Heart left ventricle (tissue), 16 donors: ENCODE measurements at regions of chr4 and their contacts with region 1.

Region 1: GRCh38 chr4:119785963-119786362 is 157.4 kb upstream of the PDE5A start:
- DNase-seq: no peak
- ATAC-seq: no peak
- H3K4me3 ChIP-seq: no peak overlapping the region
- H3K27ac ChIP-seq: no peak overlapping the region
- H3K4me1 ChIP-seq: no peaks in the 10 kb centered on the region
- H3K27me3 ChIP-seq: no peaks in the 10 kb centered on the region
- CTCF ChIP-seq: peak in 10 of 12 donors; percentile 15 to 51 (median 33)
- POLR2A ChIP-seq: no peak

Region 2: DNA sequence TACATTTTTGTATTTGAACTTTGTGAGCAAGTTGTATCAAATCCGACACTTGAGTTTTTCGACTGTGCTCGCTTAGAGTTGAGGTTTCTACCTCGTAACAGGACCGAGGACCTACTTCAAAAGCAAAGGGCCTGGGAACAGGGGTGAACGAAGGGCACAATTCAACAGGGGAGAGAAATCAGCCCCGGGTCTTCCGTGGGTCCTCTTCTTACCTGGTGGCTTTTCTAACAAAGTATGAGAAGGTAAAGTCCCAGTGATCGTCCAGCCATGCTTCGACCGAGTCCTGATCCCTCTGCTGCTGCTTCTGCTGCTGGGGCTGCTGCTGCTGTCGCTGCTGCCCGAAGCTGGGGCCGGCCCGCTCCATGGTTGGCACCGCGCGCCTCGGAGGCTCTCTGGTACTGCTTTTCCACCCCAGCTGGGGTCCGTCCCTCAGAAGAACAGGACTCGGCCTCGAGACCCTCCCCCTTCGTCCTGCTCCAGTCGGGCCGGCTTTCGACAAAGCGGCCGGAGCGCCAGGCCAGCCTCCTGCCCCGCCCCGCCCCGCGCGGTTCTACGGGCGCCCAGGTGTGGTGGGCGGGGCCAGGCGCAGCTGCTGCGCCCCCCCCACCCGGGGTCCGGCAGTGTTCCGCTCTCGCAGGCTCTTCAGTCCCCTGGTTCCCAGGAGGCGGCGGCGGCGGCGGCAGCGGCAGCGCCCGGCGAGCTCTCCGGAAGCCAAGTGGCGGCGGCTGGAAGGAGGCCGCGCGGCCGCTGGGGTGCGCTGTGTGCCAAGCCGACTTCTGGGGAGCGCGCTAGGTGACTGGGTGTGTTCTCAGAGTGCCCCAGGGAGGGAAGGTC is 157.4 kb before region 1 on chr4 and contains the start of gene PDE5A:
- intact Hi-C with region 1: loop called in 5 of 10 experiments (anchors 2 to 10 kb)
- DNase-seq: peak; percentile 76 to 90 (median 81)
- ATAC-seq: peak; percentile 78 to 94 (median 87)
- H3K4me3 ChIP-seq: peak within 1 kb of the TSS; percentile 51 to 87 (median 80)
- H3K27ac ChIP-seq: peak within 1 kb of the TSS; percentile 76 to 95 (median 87)
- H3K4me1 ChIP-seq: peaks cover 0 to 19% (median 3%) of the 10 kb centered on the region in 12 donors
- H3K27me3 ChIP-seq: peaks cover 0 to 35% (median 0%) of the 10 kb centered on the region in 9 donors
- CTCF ChIP-seq: peak; percentile 53 to 88 (median 78)
- POLR2A ChIP-seq: no peak
- total RNA-seq, gene PDE5A: 3.8 to 20.6 (median 10.0) TPM

Region 3: DNA sequence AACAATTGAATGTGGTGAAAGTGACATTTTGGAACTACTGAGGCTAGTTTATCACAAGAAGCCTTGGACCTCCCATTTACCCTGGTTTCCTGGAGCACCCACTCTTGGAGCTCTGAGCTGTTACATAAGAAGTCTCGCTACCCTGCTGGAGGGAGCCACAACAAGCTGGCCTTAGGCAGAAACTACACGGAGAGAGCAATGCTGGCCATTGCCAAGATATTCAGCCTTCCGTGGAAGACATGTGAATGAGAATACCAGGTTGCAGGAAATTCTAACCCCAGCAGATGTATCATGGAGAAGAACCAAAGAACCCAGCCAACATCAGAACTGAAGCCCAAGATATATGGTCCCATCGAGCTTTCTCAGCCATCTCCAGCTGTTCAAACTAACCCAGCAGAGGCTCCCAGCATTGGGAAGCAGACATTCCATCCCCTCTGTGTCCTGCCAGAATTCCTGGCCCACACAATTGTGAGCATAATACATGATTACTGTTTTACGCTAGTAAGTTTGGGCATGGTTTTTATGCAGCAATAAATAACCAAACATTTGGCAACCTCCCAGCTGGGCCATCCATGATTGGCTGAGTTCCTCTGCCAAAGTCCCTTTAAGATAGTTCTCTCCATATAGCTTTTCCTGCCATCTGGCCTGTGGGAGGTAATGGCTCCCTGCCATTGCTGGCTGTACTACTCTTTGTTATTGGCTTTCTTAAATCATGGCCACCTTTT is 139.5 kb before region 1 on chr4:
- intact Hi-C with region 1: loop called in 1 of 10 experiments (anchors 10 kb)
- DNase-seq: peak in 4 of 5 donors; percentile 34 to 59 (median 50)
- ATAC-seq: peak; percentile 68 to 90 (median 90)
- H3K4me3 ChIP-seq: no peak overlapping the region
- H3K27ac ChIP-seq: peak overlapping the region in 6 of 12 donors; percentile 25 to 79 (median 47)
- H3K4me1 ChIP-seq: peaks cover 0 to 14% (median 0%) of the 10 kb centered on the region in 12 donors
- H3K27me3 ChIP-seq: no peaks in the 10 kb centered on the region
- CTCF ChIP-seq: no peak
- POLR2A ChIP-seq: no peak

Region 4: GRCh38 chr4:119692001-119692400 is 94.0 kb before region 1 on chr4:
- intact Hi-C with region 1: loop called in 4 of 10 experiments (anchors 5 to 10 kb)
- DNase-seq: peak in 3 of 5 donors; percentile 22 to 28 (median 26)
- ATAC-seq: peak; percentile 70 to 81 (median 73)
- H3K4me3 ChIP-seq: peak overlapping the region in 7 of 12 donors; percentile 9 to 46 (median 38)
- H3K27ac ChIP-seq: peak overlapping the region in 5 of 12 donors; percentile 9 to 64 (median 59)
- H3K4me1 ChIP-seq: peaks cover 0 to 7% (median 0%) of the 10 kb centered on the region in 12 donors
- H3K27me3 ChIP-seq: no peaks in the 10 kb centered on the region
- CTCF ChIP-seq: peak in 9 of 12 donors; percentile 18 to 59 (median 43)
- POLR2A ChIP-seq: no peak

Region 5: GRCh38 chr4:119697887-119698393 is 88.0 kb before region 1 on chr4:
- intact Hi-C with region 1: loop called in 4 of 10 experiments (anchors 5 to 10 kb)
- DNase-seq: no peak
- ATAC-seq: no peak
- H3K4me3 ChIP-seq: no peak overlapping the region
- H3K27ac ChIP-seq: no peak overlapping the region
- H3K4me1 ChIP-seq: peaks cover 0 to 7% (median 0%) of the 10 kb centered on the region in 12 donors
- H3K27me3 ChIP-seq: no peaks in the 10 kb centered on the region
- CTCF ChIP-seq: no peak
- POLR2A ChIP-seq: no peak

Region 6: DNA sequence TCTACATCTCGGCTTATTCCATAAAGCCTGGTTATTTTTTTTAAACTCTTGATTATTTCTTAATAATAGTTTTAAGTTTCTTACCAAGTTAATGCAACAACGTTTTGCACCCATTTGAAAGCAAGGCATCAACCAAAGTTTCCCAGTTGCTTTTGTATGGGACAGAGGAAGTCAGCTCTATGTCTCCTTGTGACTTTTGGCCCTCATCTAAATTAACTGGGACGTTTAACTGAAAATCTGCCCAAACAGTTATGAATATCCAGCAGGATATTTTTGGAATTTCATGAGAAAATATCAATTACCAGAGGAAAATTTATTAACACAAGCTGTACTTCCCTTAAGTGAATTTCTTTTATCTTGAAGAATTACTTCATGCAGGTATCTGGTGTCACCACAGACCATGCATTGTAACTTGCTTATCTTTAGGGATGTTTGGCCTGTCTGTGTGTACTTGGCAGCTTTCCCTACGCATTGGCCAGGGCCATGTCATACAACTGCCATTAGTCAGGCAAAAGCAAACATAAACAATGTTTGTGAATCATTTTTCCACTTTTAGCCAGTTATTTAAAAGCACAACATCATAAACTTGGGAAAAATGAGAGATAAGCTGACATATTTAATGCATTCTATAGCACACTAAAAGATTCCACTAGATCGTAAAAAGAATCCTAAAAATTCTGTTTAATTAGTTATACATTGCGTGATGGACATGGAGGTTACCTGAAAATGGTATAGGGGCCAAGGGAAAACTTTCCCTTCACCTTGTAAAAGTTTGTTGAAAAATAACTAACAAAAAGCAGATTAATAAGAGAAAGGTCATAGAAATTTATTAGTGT is 55.9 kb before region 1 on chr4:
- intact Hi-C with region 1: loop called in 1 of 10 experiments (anchors 10 kb)
- DNase-seq: peak in 4 of 5 donors; percentile 36 to 66 (median 49)
- ATAC-seq: peak; percentile 74 to 85 (median 80)
- H3K4me3 ChIP-seq: no peak overlapping the region
- H3K27ac ChIP-seq: peak overlapping the region in 9 of 12 donors; percentile 31 to 73 (median 60)
- H3K4me1 ChIP-seq: peaks cover 0 to 63% (median 27%) of the 10 kb centered on the region in 12 donors
- H3K27me3 ChIP-seq: no peaks in the 10 kb centered on the region
- CTCF ChIP-seq: no peak
- POLR2A ChIP-seq: no peak

Region 7: DNA sequence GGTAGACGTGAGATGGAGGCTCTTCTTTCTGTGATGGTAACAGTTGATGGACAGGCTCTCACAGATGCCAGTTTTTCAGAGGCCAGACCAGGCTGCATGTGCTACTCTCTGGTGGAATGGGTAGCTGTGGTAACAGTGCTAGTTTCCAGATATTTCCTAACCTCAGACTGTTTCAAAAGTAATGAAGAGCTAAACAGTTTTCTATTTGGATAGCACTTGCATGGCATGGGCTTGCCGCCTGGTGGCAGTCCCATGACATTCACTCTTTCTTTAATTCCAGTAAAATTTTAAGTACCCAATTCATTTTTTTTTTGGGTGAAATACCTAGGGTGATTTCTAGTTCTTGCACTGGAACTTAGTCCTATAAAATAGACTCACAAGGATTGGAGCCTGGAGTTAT is 500.9 kb after region 1 on chr4:
- intact Hi-C with region 1: no loop called
- DNase-seq: no peak
- ATAC-seq: no peak
- H3K4me3 ChIP-seq: no peak overlapping the region
- H3K27ac ChIP-seq: no peak overlapping the region
- H3K4me1 ChIP-seq: no peaks in the 10 kb centered on the region
- H3K27me3 ChIP-seq: no peaks in the 10 kb centered on the region
- CTCF ChIP-seq: no peak
- POLR2A ChIP-seq: no peak